ENCODE measurements at regions of chr13 and their contacts with region 1.

Region 1: GRCh38 chr13:24489721-24490120 is 22.9 kb downstream of the PARP4 start:
- DNase-seq: no peak
- ATAC-seq: no peak
- H3K4me3 ChIP-seq: no peak overlapping the region
- H3K27ac ChIP-seq: no peak overlapping the region
- H3K4me1 ChIP-seq: no peaks in the 10 kb centered on the region
- H3K27me3 ChIP-seq: no peaks in the 10 kb centered on the region
- CTCF ChIP-seq: no peak
- POLR2A ChIP-seq: no peak
- RAD21 ChIP-seq: no peak

Region 2: DNA sequence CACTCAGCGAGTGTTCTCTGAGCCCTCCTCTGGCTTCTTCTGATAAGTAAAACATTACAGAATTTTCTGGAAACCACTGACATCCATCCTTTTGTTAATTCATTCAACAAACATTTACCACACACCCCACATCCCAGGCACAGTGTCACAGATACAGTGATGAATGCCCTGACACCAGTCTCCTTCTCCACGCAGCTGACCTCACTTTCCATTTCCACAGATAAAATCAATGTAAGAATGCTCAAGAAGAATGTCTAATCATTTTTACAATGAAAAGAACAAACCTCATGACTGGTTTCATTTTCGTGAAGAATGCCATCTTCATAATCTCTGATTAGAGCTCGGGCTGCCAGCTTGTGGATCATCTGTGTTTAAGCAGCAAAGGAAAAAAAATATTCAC is 46.4 kb before region 1 on chr13:
- CTCF ChIA-PET with region 1: no interaction called
- POLR2A ChIA-PET with region 1: no interaction called
- dilution Hi-C with region 1: no loop called
- in situ Hi-C with region 1: no loop called
- intact Hi-C with region 1: loop called (anchors 5 kb)
- DNase-seq: no peak
- ATAC-seq: no peak
- H3K4me3 ChIP-seq: no peak overlapping the region
- H3K27ac ChIP-seq: no peak overlapping the region
- H3K4me1 ChIP-seq: no peaks in the 10 kb centered on the region
- H3K27me3 ChIP-seq: no peaks in the 10 kb centered on the region
- CTCF ChIP-seq: no peak
- POLR2A ChIP-seq: no peak
- RAD21 ChIP-seq: no peak

Measured in IMR-90 (cell line).